Adrenal gland (tissue), 19 donors: ENCODE measurements at regions of chr10 and their contacts with region 1.

Region 1: DNA sequence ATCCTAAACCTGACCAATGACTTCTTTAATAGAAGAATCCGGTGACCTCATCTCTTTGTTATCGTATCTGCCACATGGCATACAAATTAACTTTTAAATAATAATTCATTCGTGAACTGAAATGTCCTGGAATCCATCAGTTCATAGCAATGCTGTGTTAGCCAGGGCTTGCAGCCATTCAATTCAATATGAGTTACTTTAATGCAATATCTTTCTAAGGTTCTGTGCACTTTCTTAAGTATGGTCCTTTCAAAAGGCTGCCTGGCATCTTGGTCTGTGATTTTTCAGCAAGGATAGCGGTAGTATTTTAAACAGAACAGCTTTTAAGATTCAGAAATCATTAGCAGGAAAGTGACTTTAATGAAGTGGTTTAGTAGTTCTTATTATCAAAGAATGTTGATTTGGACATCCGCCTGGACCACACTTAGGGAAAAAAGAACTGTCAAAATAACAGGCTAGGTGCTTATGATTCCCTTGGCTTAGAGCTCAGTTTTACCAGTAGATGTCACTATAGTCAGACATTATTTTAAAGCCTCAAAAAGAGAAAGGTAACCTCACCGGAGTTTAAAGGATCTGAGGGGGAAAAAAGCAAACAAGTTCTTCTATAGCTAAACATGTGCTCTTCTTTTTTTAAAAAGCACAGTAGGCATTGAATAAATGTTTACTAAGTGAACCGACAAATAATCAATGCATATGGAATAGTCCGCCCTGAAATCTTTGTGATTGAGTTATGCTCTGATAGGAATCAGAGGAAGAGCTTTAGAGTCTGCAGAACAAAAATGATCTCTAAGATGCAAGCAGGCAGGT is 22.7 kb downstream of the SLC35G1 start:
- DNase-seq: no peak
- H3K4me3 ChIP-seq: no peak overlapping the region
- H3K27ac ChIP-seq: no peak overlapping the region
- H3K4me1 ChIP-seq: no peaks in the 10 kb centered on the region
- H3K27me3 ChIP-seq: no peaks in the 10 kb centered on the region
- CTCF ChIP-seq: peak; percentile 7 to 64 (median 56)
- POLR2A ChIP-seq: no peak

Region 2: DNA sequence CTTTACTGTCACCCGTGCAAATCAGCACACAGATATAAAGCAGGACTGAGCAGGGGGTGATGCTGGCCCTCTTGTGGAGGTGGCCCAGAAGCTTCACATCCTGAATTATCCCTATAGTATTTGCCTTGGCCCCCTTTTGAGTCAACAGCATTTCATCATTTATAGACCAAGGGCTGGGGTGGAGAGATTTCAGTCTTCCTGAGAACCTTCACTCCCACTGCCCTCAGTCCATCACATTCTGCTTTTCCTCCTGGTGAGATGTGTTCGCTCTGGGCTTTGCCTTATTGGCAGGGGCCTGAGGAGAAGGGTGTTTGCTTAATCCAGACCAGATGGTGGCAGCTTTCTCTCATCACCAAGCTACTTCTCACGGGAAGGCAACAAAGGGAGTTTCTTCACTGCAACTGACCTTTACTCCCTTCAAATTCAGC is 398.6 kb after region 1 on chr10:
- intact Hi-C with region 1: loop called (anchors 5 to 10 kb)
- DNase-seq: no peak
- H3K4me3 ChIP-seq: no peak overlapping the region
- H3K27ac ChIP-seq: no peak overlapping the region
- H3K4me1 ChIP-seq: no peaks in the 10 kb centered on the region
- H3K27me3 ChIP-seq: no peaks in the 10 kb centered on the region
- CTCF ChIP-seq: no peak
- POLR2A ChIP-seq: no peak

Region 3: DNA sequence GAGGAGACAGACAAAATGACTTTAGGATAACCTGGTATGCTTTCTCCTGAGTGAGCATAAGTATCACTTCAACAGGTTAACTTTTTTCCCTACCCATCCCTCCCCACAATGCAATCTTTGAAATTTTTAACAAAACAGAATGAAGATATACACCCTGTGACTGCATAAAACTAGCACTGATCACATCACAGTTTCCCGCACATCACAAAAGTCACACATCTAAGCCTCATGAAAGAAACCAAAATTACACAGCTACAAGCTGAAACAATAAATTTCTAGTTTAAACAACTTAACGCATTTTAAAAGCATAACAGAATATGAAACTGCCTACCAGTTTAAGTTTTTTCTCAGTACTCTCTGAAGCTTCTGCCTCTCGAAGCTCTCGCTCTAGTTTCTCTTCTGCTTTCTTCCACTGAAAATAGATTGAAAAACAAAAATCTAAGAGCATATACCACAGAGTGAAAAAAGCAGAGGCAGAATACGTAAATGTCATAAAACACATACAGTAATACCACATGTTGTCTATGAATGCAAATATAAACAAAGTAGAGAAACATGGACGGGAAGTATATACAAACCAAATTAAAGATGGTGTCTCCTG is 428.2 kb after region 1 on chr10:
- intact Hi-C with region 1: no loop called
- DNase-seq: no peak
- H3K4me3 ChIP-seq: no peak overlapping the region
- H3K27ac ChIP-seq: no peak overlapping the region
- H3K4me1 ChIP-seq: no peaks in the 10 kb centered on the region
- H3K27me3 ChIP-seq: no peaks in the 10 kb centered on the region
- CTCF ChIP-seq: no peak
- POLR2A ChIP-seq: no peak